Mammary epithelial cell (primary cell): ENCODE measurements at regions of chr17 and their contacts with region 1.

Region 1: GRCh38 chr17:43418441-43419374 is 19.9 kb downstream of the ARL4D start:
- DNase-seq: peak; percentile 95
- H3K4me3 ChIP-seq: peak overlapping the region; percentile 16 to 41 (median 37)
- H3K27ac ChIP-seq: peak overlapping the region; percentile 73
- H3K4me1 ChIP-seq: peaks cover 39% of the 10 kb centered on the region
- H3K27me3 ChIP-seq: no peaks in the 10 kb centered on the region
- CTCF ChIP-seq: peak in 1 of 2 donors; percentile 25

Region 2: DNA sequence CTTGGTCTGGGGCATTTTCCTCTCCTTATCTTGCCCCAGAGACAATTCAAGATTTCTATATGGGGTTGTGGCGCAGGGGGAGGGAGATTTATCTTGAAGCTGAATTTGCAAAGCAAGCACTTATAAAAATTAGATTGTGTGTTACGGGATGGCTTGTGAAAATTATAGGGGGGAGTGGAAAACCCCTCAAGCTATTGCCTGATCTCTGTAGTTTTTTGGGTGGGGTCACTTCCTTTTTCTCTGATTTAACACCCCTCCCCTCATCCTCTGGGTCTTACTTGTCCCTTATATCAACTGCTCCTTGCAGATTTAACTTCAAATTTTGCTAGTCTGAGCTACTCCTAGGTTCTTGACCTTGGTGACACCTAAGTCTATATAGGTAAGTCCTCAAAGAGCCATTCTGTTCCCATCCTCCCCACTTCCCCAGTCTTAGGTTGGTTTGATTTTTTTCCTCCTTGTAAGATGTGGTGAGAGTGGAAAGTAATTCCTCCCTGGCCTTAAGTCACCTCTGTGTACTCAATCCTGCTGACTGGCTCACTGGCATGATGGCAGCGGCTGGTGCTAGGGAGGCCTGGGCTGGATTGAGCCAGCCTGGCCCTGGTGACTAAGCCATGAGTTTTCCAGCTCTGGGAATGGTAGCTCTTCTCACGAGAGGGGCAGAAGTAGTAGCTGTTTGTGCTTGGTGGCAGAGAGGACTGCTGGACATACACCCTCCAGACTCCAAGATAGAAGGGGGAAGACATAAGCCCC is 17.6 kb before region 1 on chr17:
- CTCF ChIA-PET with region 1: interaction called, 3 read pairs
- dilution Hi-C with region 1: no loop called
- in situ Hi-C with region 1: no loop called
- intact Hi-C with region 1: loop called (anchors 1 kb)
- DNase-seq: peak; percentile 93
- H3K4me3 ChIP-seq: peak overlapping the region; percentile 73 to 96 (median 82)
- H3K27ac ChIP-seq: peak overlapping the region; percentile 64
- H3K4me1 ChIP-seq: peaks cover 36% of the 10 kb centered on the region
- H3K27me3 ChIP-seq: no peaks in the 10 kb centered on the region
- CTCF ChIP-seq: no peak

Region 3: DNA sequence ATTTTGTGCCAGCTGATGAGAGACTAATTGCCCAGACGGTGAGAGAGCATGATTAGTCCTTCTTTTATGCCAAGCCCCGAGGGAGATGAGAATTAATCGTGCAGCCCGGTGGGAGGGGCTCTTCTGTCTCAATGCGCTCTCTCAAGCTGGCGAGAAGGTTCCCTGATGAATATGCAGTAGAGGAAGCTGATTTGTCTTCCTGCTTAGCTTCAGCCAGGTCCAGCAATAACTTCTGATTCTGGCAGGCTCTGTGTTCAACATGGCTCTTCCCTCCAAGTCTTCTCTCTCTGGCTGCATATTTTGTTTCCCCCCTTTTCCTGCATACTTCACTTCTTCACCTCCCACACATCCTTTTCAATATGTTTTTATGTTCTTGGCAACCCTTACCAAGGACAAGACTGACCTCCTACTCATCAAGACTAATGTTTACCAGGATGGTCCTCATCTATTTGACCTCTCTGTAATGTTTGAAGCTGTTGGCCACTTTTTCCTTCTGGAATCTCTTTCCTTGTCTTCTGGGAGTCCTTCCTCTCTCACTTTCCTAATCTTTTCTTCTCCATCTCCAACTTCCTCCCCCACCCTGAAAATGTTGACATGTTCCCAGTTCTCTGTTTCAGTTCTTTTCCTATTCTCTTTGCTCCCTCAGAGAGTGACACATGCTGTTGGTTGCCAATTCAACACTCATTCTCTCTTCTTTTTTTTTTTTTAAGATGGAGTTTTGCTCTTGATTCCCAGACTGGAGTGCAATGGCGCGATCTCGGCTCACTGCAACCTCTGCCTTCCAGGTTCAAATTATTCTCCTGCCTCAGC is 13.2 kb after region 1 on chr17:
- CTCF ChIA-PET with region 1: no interaction called
- dilution Hi-C with region 1: no loop called
- in situ Hi-C with region 1: no loop called
- intact Hi-C with region 1: no loop called
- DNase-seq: no peak
- H3K4me3 ChIP-seq: no peak overlapping the region
- H3K27ac ChIP-seq: no peak overlapping the region
- H3K4me1 ChIP-seq: peaks cover 25% of the 10 kb centered on the region
- H3K27me3 ChIP-seq: no peaks in the 10 kb centered on the region
- CTCF ChIP-seq: no peak

Region 4: GRCh38 chr17:44053125-44053872 is 634.6 kb after region 1 on chr17:
- CTCF ChIA-PET with region 1: no interaction called
- dilution Hi-C with region 1: no loop called
- in situ Hi-C with region 1: no loop called
- intact Hi-C with region 1: no loop called
- DNase-seq: no peak
- H3K4me3 ChIP-seq: no peak overlapping the region
- H3K27ac ChIP-seq: no peak overlapping the region
- H3K4me1 ChIP-seq: no peaks in the 10 kb centered on the region
- H3K27me3 ChIP-seq: no peaks in the 10 kb centered on the region
- CTCF ChIP-seq: no peak